Endothelial cell of umbilical vein (primary cell): ENCODE measurements at regions of chr20 and their contacts with region 1.

Region 1: DNA sequence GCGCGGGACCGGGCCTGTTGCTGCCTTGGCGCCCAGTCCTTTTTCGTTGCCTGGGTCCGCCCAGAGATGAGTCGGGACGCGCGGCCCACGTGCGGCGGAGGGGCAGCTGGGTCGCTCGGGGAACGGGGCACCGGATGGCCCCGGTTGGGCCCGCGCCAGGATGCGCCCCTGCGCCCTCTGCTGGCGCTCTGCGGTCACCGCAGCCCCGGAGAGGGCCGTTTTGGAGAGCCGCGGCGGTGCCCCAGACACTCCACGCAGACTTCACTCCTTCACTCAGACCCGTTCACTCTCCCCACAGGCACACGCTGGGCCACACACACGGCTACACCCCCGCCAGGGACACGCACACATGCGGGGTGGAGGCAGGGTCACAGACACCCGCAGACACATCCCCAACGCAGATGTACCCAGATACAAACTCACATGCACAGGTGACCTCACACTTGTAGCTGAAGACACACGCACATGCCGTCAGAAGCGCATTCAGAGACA is 38.8 kb downstream of the SRC start:
- DNase-seq: peak; percentile 39
- H3K4me3 ChIP-seq: peak overlapping the region in 1 of 3 experiments; percentile 38
- H3K27ac ChIP-seq: no peak overlapping the region
- H3K4me1 ChIP-seq: peaks cover 16% of the 10 kb centered on the region
- H3K27me3 ChIP-seq: no peaks in the 10 kb centered on the region
- CTCF ChIP-seq: peak; percentile 91 to 95
- POLR2A ChIP-seq: no peak

Region 2: DNA sequence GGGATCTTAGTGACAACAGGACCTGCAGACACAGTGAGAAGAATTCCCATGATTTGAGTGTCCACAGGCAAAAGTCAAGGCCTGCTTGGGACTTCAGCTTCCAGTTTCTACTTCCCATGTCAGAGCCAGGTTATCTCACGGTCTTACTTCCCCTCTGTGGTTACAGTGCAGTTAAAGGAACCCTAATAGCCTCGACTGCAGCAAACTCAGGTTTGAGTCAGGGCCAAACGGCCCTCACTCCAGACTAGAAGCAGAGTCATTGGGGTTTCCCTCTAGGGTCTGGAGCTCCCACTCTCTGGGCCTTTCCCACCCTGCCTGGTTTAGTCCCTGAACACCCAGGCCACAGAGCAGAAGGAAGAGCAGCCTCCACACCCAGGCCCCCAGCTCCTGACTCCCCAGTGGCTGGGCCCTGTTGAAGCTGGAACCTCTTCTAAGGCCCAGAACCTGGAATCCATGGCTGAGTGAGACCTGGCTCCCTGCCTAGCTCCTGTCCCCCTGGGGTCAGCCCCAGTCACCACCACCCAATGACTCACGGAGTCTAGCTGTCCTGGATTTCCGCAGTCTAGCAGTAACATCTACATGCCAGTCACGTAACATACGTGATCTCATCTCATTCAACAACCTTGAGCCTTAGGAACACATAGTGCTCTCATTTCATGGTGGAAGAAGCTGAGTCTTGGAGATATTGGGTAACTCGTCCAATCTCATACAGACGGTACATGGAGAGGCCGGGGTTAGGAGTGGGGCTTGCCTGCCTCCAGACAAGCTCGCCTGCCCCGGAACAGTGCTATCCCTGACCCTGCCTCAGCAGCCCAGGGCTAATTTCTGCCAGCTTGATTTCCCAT is 113.9 kb before region 1 on chr20:
- CTCF ChIA-PET with region 1: interaction called, 32 read pairs
- POLR2A ChIA-PET with region 1: interaction called, 3 read pairs
- dilution Hi-C with region 1: no loop called
- intact Hi-C with region 1: loop called (anchors 1 kb)
- DNase-seq: no peak
- H3K4me3 ChIP-seq: no peak overlapping the region
- H3K27ac ChIP-seq: no peak overlapping the region
- H3K4me1 ChIP-seq: no peaks in the 10 kb centered on the region
- H3K27me3 ChIP-seq: no peaks in the 10 kb centered on the region
- CTCF ChIP-seq: no peak
- POLR2A ChIP-seq: no peak

Region 3: DNA sequence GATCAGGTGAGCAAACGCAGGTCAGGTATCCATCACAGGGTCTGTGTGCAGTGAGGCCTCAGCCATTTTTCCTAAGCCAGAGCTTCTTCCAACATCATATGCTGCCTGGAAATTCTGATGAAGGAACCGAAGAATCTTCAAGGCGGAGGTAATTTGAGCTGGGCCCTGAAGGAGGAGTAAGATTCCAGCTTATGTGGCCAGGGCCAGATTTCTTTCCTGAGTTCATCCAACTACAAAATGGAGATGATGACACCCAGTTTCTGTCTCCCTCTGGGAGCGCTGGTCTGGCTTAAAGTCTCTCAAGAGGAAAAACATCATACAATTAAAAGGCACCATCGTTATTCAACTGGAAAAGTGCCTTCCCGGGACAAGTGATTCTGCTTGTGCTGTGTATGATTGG is 102.2 kb before region 1 on chr20:
- CTCF ChIA-PET with region 1: interaction called, 32 read pairs
- POLR2A ChIA-PET with region 1: no interaction called
- dilution Hi-C with region 1: no loop called
- intact Hi-C with region 1: no loop called
- DNase-seq: no peak
- H3K4me3 ChIP-seq: no peak overlapping the region
- H3K27ac ChIP-seq: no peak overlapping the region
- H3K4me1 ChIP-seq: no peaks in the 10 kb centered on the region
- H3K27me3 ChIP-seq: peaks cover 0 to 10% of the 10 kb centered on the region in 2 experiments
- CTCF ChIP-seq: no peak
- POLR2A ChIP-seq: no peak

Region 4: GRCh38 chr20:37345339-37346230 is 39.1 kb before region 1 on chr20 and contains the start of gene SRC:
- CTCF ChIA-PET with region 1: interaction called, 4 read pairs
- POLR2A ChIA-PET with region 1: no interaction called
- dilution Hi-C with region 1: no loop called
- intact Hi-C with region 1: loop called (anchors 2 kb)
- DNase-seq: peak; percentile 53
- H3K4me3 ChIP-seq: peak within 1 kb of the TSS; percentile 42 to 70 (median 48)
- H3K27ac ChIP-seq: no peak within 1 kb of the TSS
- H3K4me1 ChIP-seq: peaks cover 16% of the 10 kb centered on the region
- H3K27me3 ChIP-seq: no peaks in the 10 kb centered on the region
- CTCF ChIP-seq: no peak
- POLR2A ChIP-seq: peak; percentile 65
- total RNA-seq, gene SRC: 29.4 and 30.7 TPM in 2 replicates

Region 5: GRCh38 chr20:37527638-37528441 is 143.1 kb after region 1 on chr20 and contains the start of gene BLCAP:
- CTCF ChIA-PET with region 1: interaction called, 8 read pairs
- POLR2A ChIA-PET with region 1: no interaction called
- dilution Hi-C with region 1: no loop called
- intact Hi-C with region 1: loop called (anchors 2 kb)
- DNase-seq: peak; percentile 87
- H3K4me3 ChIP-seq: peak within 1 kb of the TSS; percentile 69 to 96 (median 94)
- H3K27ac ChIP-seq: peak within 1 kb of the TSS; percentile 99
- H3K4me1 ChIP-seq: peaks cover 25% of the 10 kb centered on the region
- H3K27me3 ChIP-seq: no peaks in the 10 kb centered on the region
- CTCF ChIP-seq: no peak
- POLR2A ChIP-seq: peak; percentile 95
- total RNA-seq, gene BLCAP: 74.1 and 90.3 TPM in 2 replicates